Left cardiac atrium (tissue), 4 donors: ENCODE measurements at regions of chr17 and their contacts with region 1.

Region 1: GRCh38 chr17:34420254-34420766 is 57.3 kb upstream of the CCL1 start:
- DNase-seq: peak; percentile 54
- ATAC-seq: peak; percentile 66 to 71

Region 2: DNA sequence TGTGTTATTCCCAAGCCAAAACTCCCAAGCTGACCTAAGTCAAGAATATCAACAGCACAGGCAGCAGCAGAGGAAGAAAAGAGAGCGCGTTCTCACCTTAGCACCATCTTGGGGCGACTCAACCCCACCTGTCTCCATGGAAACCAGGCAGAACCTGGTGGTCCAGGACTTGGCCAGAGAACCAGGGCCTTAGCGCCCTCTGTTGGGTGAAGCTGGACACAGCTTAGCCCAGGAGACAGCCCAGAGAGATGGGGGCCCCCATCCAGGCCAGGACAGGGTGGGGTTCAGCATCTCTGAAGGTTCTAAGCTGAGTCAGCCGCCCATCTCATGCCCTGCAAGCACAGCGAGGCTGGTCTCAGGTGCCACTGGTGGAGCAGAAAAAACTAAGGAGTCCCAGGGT is 99.0 kb after region 1 on chr17:
- intact Hi-C with region 1: loop called in 1 of 2 experiments (anchors 2 kb)
- DNase-seq: no peak
- ATAC-seq: no peak

Region 3: DNA sequence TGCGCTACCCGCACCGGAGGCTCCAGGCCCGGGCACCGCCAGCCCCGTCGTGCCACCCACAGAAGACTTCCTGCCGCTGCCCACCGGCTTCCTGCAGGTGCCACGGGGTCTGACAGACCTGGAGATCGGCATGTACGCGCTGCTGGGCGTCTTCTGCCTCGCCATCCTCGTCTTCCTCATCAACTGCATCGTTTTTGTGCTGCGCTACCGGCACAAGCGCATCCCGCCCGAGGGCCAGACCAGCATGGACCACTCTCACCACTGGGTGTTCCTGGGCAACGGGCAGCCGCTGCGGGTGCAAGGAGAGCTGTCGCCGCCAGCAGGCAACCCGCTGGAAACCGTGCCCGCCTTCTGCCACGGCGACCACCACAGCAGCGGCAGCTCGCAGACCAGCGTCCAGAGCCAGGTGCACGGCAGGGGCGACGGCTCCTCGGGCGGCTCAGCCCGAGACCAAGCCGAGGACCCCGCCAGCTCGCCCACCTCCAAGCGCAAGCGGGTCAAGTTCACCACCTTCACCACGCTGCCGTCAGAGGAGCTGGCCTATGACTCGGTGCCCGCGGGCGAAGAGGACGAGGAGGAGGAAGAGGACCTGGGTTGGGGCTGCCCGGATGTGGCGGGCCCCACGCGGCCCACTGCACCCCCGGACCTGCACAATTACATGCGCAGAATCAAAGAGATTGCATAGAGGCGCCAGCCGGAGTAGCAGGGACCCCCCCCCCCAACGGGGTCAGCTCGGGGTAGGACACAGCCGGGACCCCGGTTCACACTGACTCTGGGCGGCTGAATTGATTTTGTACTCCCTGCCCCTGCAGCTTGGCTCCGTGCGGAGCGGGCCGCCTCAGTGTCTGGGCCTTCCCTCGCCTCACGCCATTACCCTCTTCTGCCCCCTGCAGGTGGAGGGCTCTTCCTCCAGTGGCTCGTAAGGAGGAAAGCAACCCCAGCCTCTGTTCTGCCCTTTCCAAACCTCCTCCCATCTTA is 217.5 kb after region 1 on chr17:
- intact Hi-C with region 1: loop called (anchors 5 to 10 kb)
- DNase-seq: peak; percentile 82
- ATAC-seq: peak; percentile 95 to 96

Region 4: DNA sequence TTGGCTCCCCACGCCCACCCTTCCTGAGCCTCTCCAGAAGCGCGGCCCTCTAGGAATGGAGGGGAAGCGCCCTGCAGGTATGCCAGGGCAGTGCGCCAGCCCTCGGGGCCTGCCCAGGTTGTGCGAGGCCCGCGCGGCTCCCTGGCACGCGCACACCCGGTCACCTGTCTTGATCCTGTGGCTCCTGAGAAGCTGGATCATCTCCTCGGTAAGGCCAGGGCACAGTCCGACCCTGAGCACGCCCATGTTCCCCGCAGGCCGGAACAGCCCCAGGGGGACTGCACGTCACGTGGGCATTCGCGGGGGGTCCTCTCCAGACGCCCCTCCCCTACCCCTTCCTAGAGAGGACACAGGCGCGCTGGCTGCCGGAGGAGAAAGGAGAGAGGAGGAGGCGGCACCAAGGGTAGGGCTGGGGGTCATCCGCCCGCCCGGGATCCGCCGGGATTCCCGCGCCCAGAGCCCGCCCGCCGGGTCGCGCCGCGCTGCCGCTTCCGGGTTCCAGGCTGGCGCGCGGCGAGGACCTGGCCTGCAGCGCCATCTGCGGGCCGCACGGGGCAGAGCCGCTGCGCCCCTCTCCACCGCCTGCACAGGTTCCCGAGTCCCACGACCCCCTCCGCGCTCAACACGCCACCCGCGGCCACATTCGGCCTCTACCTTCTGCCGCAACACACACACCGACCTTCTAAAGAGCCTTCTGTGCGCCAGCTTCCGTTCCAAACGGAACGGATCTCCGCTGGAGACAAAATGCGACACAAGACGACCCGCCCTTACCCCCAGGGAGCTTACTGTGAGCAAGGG is 699.3 kb after region 1 on chr17 and contains the start of gene RAD51D:
- intact Hi-C with region 1: loop called in 1 of 2 experiments (anchors 2 kb)
- DNase-seq: peak; percentile 73
- ATAC-seq: peak; percentile 97
- total RNA-seq, gene RAD51D: 4.7 to 9.2 TPM